Left ventricle myocardium inferior (tissue), 1 donor: ENCODE measurements at regions of chr1 and their contacts with region 1.

Region 1: DNA sequence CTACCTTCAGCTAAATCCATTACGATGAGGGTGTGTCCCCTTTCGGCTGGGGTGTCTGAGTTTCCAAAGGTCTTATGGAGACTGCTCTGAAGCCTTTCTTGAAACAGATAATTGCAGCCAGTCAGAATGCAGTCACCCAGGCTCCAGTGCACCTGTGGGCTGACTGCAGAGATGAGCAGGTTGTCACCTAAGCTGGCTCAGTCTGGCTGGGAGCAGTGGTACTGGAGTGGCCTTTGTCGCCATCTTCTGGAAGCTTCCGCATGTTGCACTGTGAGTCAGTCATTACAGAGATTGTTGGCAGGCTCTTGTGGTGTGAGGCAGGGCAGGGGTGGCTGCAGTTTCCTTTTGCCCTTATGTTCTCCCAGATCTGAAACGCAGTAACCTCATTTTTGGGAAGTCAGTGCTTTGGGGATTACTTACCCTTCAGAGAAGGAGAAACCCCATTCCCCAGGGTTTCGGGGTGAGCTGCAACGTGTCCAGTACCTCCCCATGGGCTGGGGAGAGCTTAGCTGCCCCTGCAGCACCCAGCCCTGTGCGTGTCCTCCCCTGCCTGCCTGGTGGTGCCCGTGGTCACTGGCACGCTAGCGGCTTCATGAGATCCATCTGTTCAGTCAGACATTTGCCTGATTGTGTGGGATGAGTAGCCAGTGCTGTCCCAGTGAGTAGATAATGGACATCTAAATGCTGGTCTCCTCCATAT is 48.0 kb downstream of the SMYD2 start:
- DNase-seq: peak; percentile 73
- H3K4me3 ChIP-seq: no peak overlapping the region
- H3K27ac ChIP-seq: peak overlapping the region; percentile 73
- H3K4me1 ChIP-seq: peaks cover 56% of the 10 kb centered on the region
- H3K27me3 ChIP-seq: no peaks in the 10 kb centered on the region
- CTCF ChIP-seq: peak; percentile 96

Region 2: DNA sequence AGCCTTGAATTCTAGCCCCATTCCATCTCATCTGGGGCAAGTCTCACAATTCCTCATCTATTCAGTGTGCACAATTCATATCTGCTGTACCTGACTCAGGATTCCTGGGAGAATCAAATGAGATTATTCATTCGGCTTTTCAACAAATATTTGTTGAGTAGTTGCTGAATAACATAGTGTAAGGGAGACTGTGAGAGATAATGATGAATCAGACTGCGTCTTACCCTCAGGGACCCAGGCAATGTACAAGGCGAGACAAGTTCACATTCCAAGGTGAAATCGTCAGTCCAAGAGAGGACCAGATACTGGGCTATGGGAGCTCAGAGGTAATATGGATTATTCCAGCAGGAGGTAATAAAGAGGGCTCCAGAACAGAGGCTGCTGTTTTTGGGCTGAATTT is 115.8 kb before region 1 on chr1:
- intact Hi-C with region 1: loop called (anchors 5 kb)
- DNase-seq: no peak
- H3K4me3 ChIP-seq: no peak overlapping the region
- H3K27ac ChIP-seq: no peak overlapping the region
- H3K4me1 ChIP-seq: peaks cover 10% of the 10 kb centered on the region
- H3K27me3 ChIP-seq: peaks cover 6% of the 10 kb centered on the region
- CTCF ChIP-seq: no peak

Region 3: GRCh38 chr1:214261206-214262123 is 67.5 kb before region 1 on chr1:
- intact Hi-C with region 1: loop called (anchors 2 kb)
- DNase-seq: peak; percentile 85
- H3K4me3 ChIP-seq: peak overlapping the region; percentile 15
- H3K27ac ChIP-seq: peak overlapping the region; percentile 80
- H3K4me1 ChIP-seq: peaks cover 16% of the 10 kb centered on the region
- H3K27me3 ChIP-seq: peaks cover 36% of the 10 kb centered on the region
- CTCF ChIP-seq: peak; percentile 97

Region 4: GRCh38 chr1:214584805-214585766 is 256.2 kb after region 1 on chr1:
- intact Hi-C with region 1: loop called (anchors 5 kb)
- DNase-seq: no peak
- H3K4me3 ChIP-seq: no peak overlapping the region
- H3K27ac ChIP-seq: no peak overlapping the region
- H3K4me1 ChIP-seq: no peaks in the 10 kb centered on the region
- H3K27me3 ChIP-seq: no peaks in the 10 kb centered on the region
- CTCF ChIP-seq: peak; percentile 80